ENCODE measurements at regions of chrX and their contacts with region 1.

Region 1: GRCh38 chrX:56563231-56564161 is at the start of gene UBQLN2:
- DNase-seq: no peak
- ATAC-seq: peak; percentile 84
- H3K4me3 ChIP-seq: peak within 1 kb of the TSS; percentile 76
- H3K27ac ChIP-seq: peak within 1 kb of the TSS; percentile 77
- H3K4me1 ChIP-seq: no peaks in the 10 kb centered on the region
- H3K27me3 ChIP-seq: no peaks in the 10 kb centered on the region
- CTCF ChIP-seq: no peak
- EP300 ChIP-seq: no peak
- POLR2A ChIP-seq: peak; percentile 93
- RAD21 ChIP-seq: no peak
- polyA plus RNA-seq, gene UBQLN2: 2.4 to 6.2 TPM

Region 2: DNA sequence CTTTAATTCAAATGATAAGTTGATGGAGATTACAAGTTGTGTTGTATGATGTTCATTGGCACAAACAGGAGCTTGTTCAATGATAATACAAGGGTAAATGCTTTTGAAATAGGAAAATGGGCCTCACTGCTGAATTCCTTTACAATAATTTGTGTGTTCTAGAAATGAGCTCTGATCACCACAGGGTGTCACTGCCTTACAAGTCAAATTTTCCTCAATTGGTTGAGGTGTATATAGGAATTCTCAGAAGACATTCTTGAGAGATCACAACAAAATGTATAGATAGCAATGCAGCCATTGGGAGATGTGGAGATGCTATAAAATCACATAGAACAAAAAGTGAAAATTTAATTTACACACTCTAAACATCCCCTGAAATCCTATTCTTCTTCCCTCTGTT is 281.7 kb before region 1 on chrX:
- CTCF ChIA-PET with region 1: no interaction called
- POLR2A ChIA-PET with region 1: no interaction called
- RAD21 ChIA-PET with region 1: no interaction called
- SMC1A ChIA-PET with region 1: no interaction called
- in situ Hi-C with region 1: no loop called
- intact Hi-C with region 1: loop called (anchors 10 kb)
- DNase-seq: no peak
- ATAC-seq: no peak
- H3K4me3 ChIP-seq: no peak overlapping the region
- H3K27ac ChIP-seq: no peak overlapping the region
- H3K4me1 ChIP-seq: no peaks in the 10 kb centered on the region
- H3K27me3 ChIP-seq: no peaks in the 10 kb centered on the region
- CTCF ChIP-seq: peak; percentile 15 to 37 (median 19); a peak in 2 of 6 replicates
- EP300 ChIP-seq: no peak
- POLR2A ChIP-seq: no peak
- RAD21 ChIP-seq: peak; percentile 65

Region 3: DNA sequence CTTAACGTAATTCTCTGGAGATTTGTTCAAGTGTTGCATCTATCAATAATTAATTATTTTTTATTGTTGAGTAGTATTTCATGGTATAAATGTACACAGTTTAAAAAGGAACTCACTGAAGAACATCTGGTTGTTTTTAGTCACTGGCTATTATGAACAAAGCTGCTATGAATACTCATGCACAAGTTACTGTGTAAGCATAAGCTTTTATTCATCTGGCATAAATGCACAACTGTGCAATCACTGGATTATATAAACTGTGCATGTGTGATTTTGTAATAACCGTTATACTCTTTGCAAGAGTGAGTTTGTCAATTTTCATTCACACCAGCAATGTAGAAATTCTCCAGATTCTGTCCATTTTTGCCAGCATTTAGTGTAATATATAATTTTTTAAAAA is 43.9 kb before region 1 on chrX:
- CTCF ChIA-PET with region 1: no interaction called
- POLR2A ChIA-PET with region 1: no interaction called
- RAD21 ChIA-PET with region 1: no interaction called
- SMC1A ChIA-PET with region 1: no interaction called
- in situ Hi-C with region 1: no loop called
- intact Hi-C with region 1: no loop called
- DNase-seq: no peak
- ATAC-seq: no peak
- H3K4me3 ChIP-seq: no peak overlapping the region
- H3K27ac ChIP-seq: no peak overlapping the region
- H3K4me1 ChIP-seq: no peaks in the 10 kb centered on the region
- H3K27me3 ChIP-seq: no peaks in the 10 kb centered on the region
- CTCF ChIP-seq: no peak
- EP300 ChIP-seq: no peak
- POLR2A ChIP-seq: no peak
- RAD21 ChIP-seq: no peak

Region 4: GRCh38 chrX:56661193-56661592 is 97.7 kb after region 1 on chrX:
- CTCF ChIA-PET with region 1: no interaction called
- POLR2A ChIA-PET with region 1: no interaction called
- RAD21 ChIA-PET with region 1: no interaction called
- SMC1A ChIA-PET with region 1: no interaction called
- in situ Hi-C with region 1: no loop called
- intact Hi-C with region 1: no loop called
- DNase-seq: no peak
- ATAC-seq: no peak
- H3K4me3 ChIP-seq: no peak overlapping the region
- H3K27ac ChIP-seq: no peak overlapping the region
- H3K4me1 ChIP-seq: no peaks in the 10 kb centered on the region
- H3K27me3 ChIP-seq: no peaks in the 10 kb centered on the region
- CTCF ChIP-seq: no peak
- EP300 ChIP-seq: no peak
- POLR2A ChIP-seq: no peak
- RAD21 ChIP-seq: no peak

Region 5: GRCh38 chrX:57137501-57137900 is 574.0 kb after region 1 on chrX:
- CTCF ChIA-PET with region 1: no interaction called
- POLR2A ChIA-PET with region 1: no interaction called
- RAD21 ChIA-PET with region 1: no interaction called
- SMC1A ChIA-PET with region 1: no interaction called
- in situ Hi-C with region 1: loop called (anchors 25 kb)
- intact Hi-C with region 1: no loop called
- DNase-seq: no peak
- ATAC-seq: no peak
- H3K4me3 ChIP-seq: no peak overlapping the region
- H3K27ac ChIP-seq: no peak overlapping the region
- H3K4me1 ChIP-seq: no peaks in the 10 kb centered on the region
- H3K27me3 ChIP-seq: no peaks in the 10 kb centered on the region
- CTCF ChIP-seq: no peak
- EP300 ChIP-seq: no peak
- POLR2A ChIP-seq: no peak
- RAD21 ChIP-seq: no peak

Region 6: GRCh38 chrX:57918750-57919436 is 1355.4 kb after region 1 on chrX:
- CTCF ChIA-PET with region 1: no interaction called
- POLR2A ChIA-PET with region 1: no interaction called
- RAD21 ChIA-PET with region 1: no interaction called
- SMC1A ChIA-PET with region 1: no interaction called
- in situ Hi-C with region 1: loop called (anchors 25 kb)
- intact Hi-C with region 1: no loop called
- DNase-seq: no peak
- ATAC-seq: peak; percentile 66
- H3K4me3 ChIP-seq: no peak overlapping the region
- H3K27ac ChIP-seq: no peak overlapping the region
- H3K4me1 ChIP-seq: no peaks in the 10 kb centered on the region
- H3K27me3 ChIP-seq: no peaks in the 10 kb centered on the region
- CTCF ChIP-seq: peak; percentile 45 to 49 (median 47); a peak in 5 of 6 replicates
- EP300 ChIP-seq: no peak
- POLR2A ChIP-seq: no peak
- RAD21 ChIP-seq: peak; percentile 52

Measured in GM12878 (cell line).